Activated CD4-positive, alpha-beta T cell treated with anti-CD3 and anti-CD28 coated beads for 36 hours (primary cell): ENCODE measurements at regions of chr12 and their contacts with region 1.

Region 1: GRCh38 chr12:132710422-132711168 is at the start of gene PGAM5:
- DNase-seq: peak; percentile 92
- ATAC-seq: peak; percentile 92
- H3K4me3 Mint-ChIP-seq: peak within 1 kb of the TSS; percentile 75
- H3K27ac Mint-ChIP-seq: peak within 1 kb of the TSS; percentile 66
- H3K4me1 Mint-ChIP-seq: peaks cover 24% of the 10 kb centered on the region
- H3K27me3 Mint-ChIP-seq: no peaks in the 10 kb centered on the region
- total RNA-seq, gene PGAM5: 65.6 to 74.0 TPM

Region 2: GRCh38 chr12:130787445-130788410 is 1922.9 kb before region 1 on chr12:
- CTCF ChIA-PET with region 1: no interaction called
- POLR2A ChIA-PET with region 1: no interaction called
- intact Hi-C with region 1: no loop called
- DNase-seq: no peak
- ATAC-seq: no peak
- H3K4me3 Mint-ChIP-seq: no peak overlapping the region
- H3K27ac Mint-ChIP-seq: no peak overlapping the region
- H3K4me1 Mint-ChIP-seq: no peaks in the 10 kb centered on the region
- H3K27me3 Mint-ChIP-seq: no peaks in the 10 kb centered on the region

Region 3: DNA sequence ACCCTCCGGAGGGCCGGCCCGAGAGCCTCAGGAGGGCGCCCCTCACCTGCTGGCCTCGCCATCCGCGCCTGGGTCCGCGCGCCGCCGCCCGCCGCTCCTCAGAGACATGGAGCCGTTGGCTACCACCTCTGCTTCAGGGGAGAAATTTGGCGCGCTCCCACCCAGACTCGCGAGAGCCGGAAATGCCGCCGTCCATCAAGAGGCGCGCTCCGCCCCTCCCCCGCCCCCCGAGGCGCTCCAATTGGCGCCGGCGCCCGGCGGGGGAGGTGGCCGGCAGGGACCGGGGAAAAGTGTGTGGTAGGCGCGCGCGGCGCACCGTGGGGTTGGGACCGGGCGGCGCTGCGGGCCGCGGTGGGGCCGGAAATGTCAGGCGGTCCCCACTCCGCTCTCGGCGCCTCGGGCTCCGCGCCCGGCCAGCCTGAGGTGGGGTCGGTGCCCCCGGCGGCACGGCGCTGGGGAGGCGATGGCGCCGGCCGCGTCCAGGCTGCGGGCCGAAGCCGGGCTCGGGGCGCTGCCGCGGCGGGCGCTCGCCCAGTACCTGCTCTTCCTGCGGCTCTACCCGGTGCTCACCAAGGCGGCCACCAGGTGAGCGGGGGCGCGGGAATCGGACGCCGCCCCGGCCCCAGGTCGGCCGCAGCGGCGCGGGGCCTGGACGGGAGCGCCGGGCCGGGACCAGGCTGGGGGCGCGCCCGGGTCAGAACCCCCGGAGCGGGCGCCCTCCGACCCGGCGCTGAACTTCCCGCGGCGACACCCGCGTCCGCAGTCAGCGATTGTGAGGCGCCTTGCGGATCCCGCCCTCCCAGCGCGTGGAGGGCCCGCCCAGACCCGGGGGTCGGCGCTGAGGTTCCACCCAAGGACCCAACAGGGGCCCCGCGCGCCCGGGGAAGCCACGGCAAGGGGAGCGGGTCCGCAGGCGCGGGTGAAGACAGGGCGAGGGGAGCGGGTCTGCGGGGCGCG is 23.1 kb before region 1 on chr12 and contains the starts of genes POLE and PXMP2:
- CTCF ChIA-PET with region 1: interaction called, 4 read pairs
- POLR2A ChIA-PET with region 1: no interaction called
- intact Hi-C with region 1: loop called (anchors 1 kb)
- DNase-seq: peak; percentile 98
- ATAC-seq: peak; percentile 94
- H3K4me3 Mint-ChIP-seq: peak within 1 kb of the TSS; percentile 72
- H3K27ac Mint-ChIP-seq: peak within 1 kb of the TSS; percentile 55
- H3K4me1 Mint-ChIP-seq: peaks cover 19% of the 10 kb centered on the region
- H3K27me3 Mint-ChIP-seq: no peaks in the 10 kb centered on the region
- total RNA-seq, gene POLE: 121 to 124 TPM
- total RNA-seq, gene PXMP2: 12.2 to 14.3 TPM